Left cardiac atrium (tissue), 4 donors: ENCODE measurements at regions of chr1 and their contacts with region 1.

Region 1: DNA sequence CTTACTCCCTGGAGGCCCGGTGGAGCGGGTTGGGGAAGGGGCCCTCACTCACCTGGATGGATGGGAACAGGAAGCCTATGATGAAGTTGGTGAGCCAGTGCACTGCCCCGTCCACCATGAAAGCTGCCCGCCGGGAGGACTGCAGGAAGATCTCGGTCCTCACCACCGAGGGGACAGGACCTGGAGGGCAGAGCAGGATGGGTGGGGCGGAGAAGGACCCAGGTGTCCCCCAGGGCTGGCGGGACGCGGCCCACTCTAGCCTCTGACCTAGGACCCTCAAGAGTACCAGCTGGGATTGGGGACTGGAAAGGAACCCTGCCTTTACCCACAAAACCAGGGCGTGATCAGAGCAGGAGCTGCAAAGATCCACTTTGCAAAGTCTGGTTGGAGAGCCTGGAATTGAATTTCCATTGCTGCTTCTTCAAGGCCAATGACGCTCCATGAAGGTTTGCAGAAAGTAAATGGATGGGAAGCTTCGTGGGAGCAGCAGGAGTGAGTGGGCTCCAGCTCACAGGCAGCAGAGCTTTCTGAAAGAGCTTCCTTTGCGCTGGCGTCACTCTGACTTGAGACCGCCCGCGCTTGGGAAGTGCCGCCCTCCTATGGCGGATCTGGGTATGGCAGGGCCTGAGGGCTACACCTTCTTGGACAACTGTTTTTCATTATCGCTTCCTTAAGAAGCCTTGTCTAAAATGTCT is 21.4 kb downstream of the SLC2A7 start:
- DNase-seq: peak; percentile 84
- ATAC-seq: peak; percentile 78 to 80

Region 2: GRCh38 chr1:8913111-8913856 is 91.6 kb before region 1 on chr1:
- intact Hi-C with region 1: loop called in 1 of 2 experiments (anchors 5 kb)
- DNase-seq: no peak
- ATAC-seq: no peak

Region 3: GRCh38 chr1:9101510-9102146 is 96.8 kb after region 1 on chr1:
- intact Hi-C with region 1: loop called in 1 of 2 experiments (anchors 5 kb)
- DNase-seq: no peak
- ATAC-seq: peak; percentile 66 to 68